ENCODE measurements at regions of chr11 and their contacts with region 1.

Region 1: DNA sequence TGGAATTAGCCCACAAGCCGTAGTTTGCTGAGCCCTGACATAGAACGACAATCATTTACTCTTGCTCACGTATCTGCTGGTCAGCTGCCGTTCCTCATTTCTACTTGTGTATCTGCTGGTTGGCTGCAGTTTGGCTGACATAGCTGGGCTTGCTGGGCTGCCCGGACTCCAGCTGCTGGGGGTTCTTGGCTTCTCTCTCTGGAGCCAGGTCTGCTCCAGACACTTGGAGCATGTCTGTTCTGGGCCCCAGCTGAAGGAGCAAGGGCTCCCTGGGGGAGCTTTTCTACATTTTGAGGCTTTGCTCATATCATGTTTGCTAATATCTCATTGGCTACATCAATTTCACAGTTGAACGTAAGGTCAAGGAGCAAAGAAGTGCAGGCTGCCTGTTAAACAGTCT is 47.3 kb downstream of the PRDM11 start:
- DNase-seq: no peak
- H3K4me3 ChIP-seq: no peak overlapping the region
- H3K27ac ChIP-seq: no peak overlapping the region
- H3K4me1 ChIP-seq: no peaks in the 10 kb centered on the region
- H3K27me3 ChIP-seq: no peaks in the 10 kb centered on the region
- CTCF ChIP-seq: no peak
- POLR2A ChIP-seq: no peak

Region 2: GRCh38 chr11:45209891-45210699 is 16.4 kb after region 1 on chr11:
- CTCF ChIA-PET with region 1: no interaction called
- POLR2A ChIA-PET with region 1: no interaction called
- dilution Hi-C with region 1: no loop called
- intact Hi-C with region 1: loop called (anchors 2 kb)
- DNase-seq: peak; percentile 76
- H3K4me3 ChIP-seq: no peak overlapping the region
- H3K27ac ChIP-seq: peak overlapping the region; percentile 17
- H3K4me1 ChIP-seq: peaks cover 14% of the 10 kb centered on the region
- H3K27me3 ChIP-seq: no peaks in the 10 kb centered on the region
- CTCF ChIP-seq: peak in 1 of 2 donors; percentile 8
- POLR2A ChIP-seq: peak; percentile 24

Measured in endothelial cell of umbilical vein (primary cell).